Prostate gland (tissue), 2 donors: ENCODE measurements at regions of chr1 and their contacts with region 1.

Region 1: GRCh38 chr1:22105611-22106207 is 37.2 kb downstream of the WNT4 start:
- DNase-seq: peak; percentile 47
- H3K4me3 ChIP-seq: no peak overlapping the region
- H3K27ac ChIP-seq: no peak overlapping the region
- H3K4me1 ChIP-seq: no peaks in the 10 kb centered on the region
- H3K27me3 ChIP-seq: no peaks in the 10 kb centered on the region
- CTCF ChIP-seq: peak; percentile 38 to 88 (median 88)
- POLR2A ChIP-seq: peak; percentile 6

Region 2: GRCh38 chr1:22275721-22276395 is 170.1 kb after region 1 on chr1:
- intact Hi-C with region 1: loop called (anchors 5 kb)
- DNase-seq: peak; percentile 65
- H3K4me3 ChIP-seq: no peak overlapping the region
- H3K27ac ChIP-seq: no peak overlapping the region
- H3K4me1 ChIP-seq: no peaks in the 10 kb centered on the region
- H3K27me3 ChIP-seq: no peaks in the 10 kb centered on the region
- CTCF ChIP-seq: peak; percentile 64 to 90 (median 80)
- POLR2A ChIP-seq: no peak